A549 (cell line): ENCODE measurements at regions of chr7 and their contacts with region 1.

Region 1: DNA sequence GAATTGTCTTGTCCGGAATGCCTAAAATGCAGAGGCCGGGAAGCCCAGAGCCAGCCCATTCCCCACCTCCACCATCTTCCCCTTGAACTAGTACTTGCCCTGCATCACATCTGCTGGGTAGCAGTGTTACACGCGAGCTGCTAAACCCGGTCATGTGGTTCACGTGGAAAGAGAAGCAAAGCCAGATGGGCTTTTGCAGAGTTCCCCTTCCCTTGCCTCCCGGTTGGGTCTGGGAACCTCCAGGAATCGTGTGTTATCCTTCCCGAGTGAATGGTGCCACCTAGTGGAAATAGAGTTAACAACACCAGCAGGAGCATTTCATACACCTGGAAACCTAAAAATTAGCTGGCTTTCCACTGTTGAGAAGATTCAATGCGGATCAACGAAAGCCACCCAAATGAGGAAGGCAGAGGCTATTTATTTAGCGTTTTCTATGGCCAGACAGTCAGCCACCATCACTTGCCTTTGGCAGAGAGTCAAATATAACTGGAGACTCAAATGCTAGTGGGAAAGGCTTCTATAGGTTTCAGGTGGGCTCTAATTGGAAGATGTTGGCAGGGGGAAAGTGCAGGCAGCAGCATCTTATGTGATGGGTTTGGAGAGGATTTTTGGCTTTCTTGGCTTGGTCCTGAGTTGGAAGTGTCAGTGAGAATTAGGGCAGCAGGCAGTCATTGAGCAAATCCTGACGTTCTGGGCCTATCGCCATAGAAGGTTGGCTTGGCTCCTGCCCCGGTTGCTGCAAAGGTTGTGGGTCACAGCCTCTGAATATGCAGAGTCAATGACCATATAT is 12.9 kb upstream of the DENND2A start:
- DNase-seq: peak; percentile 73 to 81
- ATAC-seq: peak; percentile 86 to 93
- H3K4me3 ChIP-seq: no peak overlapping the region
- H3K27ac ChIP-seq: peak overlapping the region; percentile 15 to 41; a peak in 3 of 6 replicates
- H3K4me1 ChIP-seq: peaks cover 4% of the 10 kb centered on the region; the same call in 1 of the 3 replicates
- CTCF ChIP-seq: peak; percentile 96
- EP300 ChIP-seq: no peak
- POLR2A ChIP-seq: no peak
- RAD21 ChIP-seq: peak; percentile 96 to 99

Region 2: DNA sequence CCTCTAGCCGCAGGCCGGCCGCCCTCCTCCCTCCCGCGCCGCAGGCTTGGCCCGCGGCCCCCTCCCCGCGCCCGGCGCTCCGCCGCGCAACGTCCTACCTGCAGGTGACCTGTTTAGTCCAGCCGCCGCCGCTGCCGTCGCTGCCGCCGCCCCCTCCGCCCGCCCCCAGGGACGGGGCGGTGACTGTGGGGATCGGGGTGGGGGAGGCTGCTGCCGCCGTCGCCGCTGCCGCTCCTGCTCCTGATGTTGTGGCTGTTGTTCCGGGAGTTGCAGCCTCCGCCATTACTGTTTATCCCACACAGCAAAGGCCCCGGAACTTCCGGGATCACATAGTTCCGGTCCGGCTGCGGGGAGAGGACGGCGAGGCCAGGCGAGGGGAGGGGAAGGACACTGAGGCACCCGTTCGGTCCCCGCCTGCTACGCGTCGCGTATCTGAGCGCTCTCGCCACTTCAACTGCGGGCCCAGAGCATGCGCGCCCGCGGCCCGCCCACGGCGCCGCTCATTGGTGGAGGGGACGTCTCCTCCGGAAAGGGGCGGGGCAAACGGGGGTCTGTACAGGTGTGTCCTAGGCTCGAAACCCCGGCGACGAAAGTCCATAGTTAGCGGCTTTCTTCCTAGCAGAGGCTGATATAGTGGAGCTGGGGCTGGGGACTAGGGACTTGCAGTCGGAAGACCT is 174.3 kb before region 1 on chr7 and contains the start of gene MKRN1:
- CTCF ChIA-PET with region 1: interaction called, 44 read pairs
- POLR2A ChIA-PET with region 1: interaction called, 3 read pairs
- DNase-seq: peak; percentile 91 to 95
- ATAC-seq: peak; percentile 97 to 98
- H3K4me3 ChIP-seq: peak within 1 kb of the TSS; percentile 82
- H3K27ac ChIP-seq: peak within 1 kb of the TSS; percentile 89 to 95
- H3K4me1 ChIP-seq: peaks cover 13% of the 10 kb centered on the region; the same call in 2 of the 3 replicates
- CTCF ChIP-seq: no peak
- EP300 ChIP-seq: no peak
- POLR2A ChIP-seq: peak; percentile 47
- RAD21 ChIP-seq: no peak
- polyA plus RNA-seq, gene MKRN1: 65.1 and 68.8 TPM in 2 replicates

Region 3: GRCh38 chr7:140506788-140507464 is 146.6 kb before region 1 on chr7:
- CTCF ChIA-PET with region 1: interaction called, 493 read pairs
- POLR2A ChIA-PET with region 1: no interaction called
- DNase-seq: peak in 1 of 2 experiments; percentile 27
- ATAC-seq: peak; percentile 74 to 84
- H3K4me3 ChIP-seq: no peak overlapping the region
- H3K27ac ChIP-seq: peak overlapping the region in 1 of 2 experiments; percentile 18; a peak in 1 of 6 replicates
- H3K4me1 ChIP-seq: 0 out of 3 replicates have a peak, but pooled peaks cover 3% of the 10 kb centered on the region
- CTCF ChIP-seq: no peak
- EP300 ChIP-seq: no peak
- POLR2A ChIP-seq: no peak
- RAD21 ChIP-seq: no peak

Region 4: DNA sequence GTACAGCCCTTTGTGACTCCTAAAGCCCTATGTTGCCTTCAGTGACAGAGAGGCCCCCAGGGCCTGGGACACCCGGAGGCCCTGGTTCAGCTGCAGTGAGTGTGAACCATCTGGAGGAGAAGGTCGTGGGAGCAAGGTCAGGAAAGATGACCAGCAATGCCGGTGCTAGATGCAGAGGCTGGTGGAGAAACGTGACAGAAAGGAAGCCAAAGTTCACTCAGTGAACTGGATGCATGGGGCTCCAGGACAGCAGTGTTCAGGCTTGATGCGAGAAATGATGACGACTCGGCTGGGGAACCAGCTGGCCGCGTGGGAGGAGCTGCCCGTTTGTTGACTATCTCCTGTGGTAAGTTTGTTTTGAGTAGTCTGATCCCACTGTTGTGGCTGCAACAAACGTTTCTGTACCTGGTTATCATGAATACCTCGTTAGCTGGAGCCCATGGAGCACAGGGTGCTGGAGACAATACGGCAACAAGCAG is 120.1 kb before region 1 on chr7:
- CTCF ChIA-PET with region 1: interaction called, 493 read pairs
- POLR2A ChIA-PET with region 1: no interaction called
- DNase-seq: no peak
- ATAC-seq: no peak
- H3K4me3 ChIP-seq: no peak overlapping the region
- H3K27ac ChIP-seq: no peak overlapping the region
- H3K4me1 ChIP-seq: no peaks in the 10 kb centered on the region
- CTCF ChIP-seq: no peak
- EP300 ChIP-seq: no peak
- POLR2A ChIP-seq: no peak
- RAD21 ChIP-seq: no peak

Region 5: GRCh38 chr7:140635821-140636220 is 17.7 kb before region 1 on chr7:
- CTCF ChIA-PET with region 1: interaction called, 14 read pairs
- POLR2A ChIA-PET with region 1: no interaction called
- DNase-seq: no peak
- ATAC-seq: no peak
- H3K4me3 ChIP-seq: no peak overlapping the region
- H3K27ac ChIP-seq: no peak overlapping the region
- H3K4me1 ChIP-seq: no peaks in the 10 kb centered on the region; the same call in 2 of the 3 replicates
- CTCF ChIP-seq: no peak
- EP300 ChIP-seq: no peak
- POLR2A ChIP-seq: no peak
- RAD21 ChIP-seq: no peak

Region 6: GRCh38 chr7:140640727-140641523 is 12.6 kb before region 1 on chr7 and contains the start of gene DENND2A:
- CTCF ChIA-PET with region 1: interaction called, 15 read pairs
- POLR2A ChIA-PET with region 1: no interaction called
- DNase-seq: no peak
- ATAC-seq: peak; percentile 38 to 55
- H3K4me3 ChIP-seq: peak within 1 kb of the TSS; percentile 63
- H3K27ac ChIP-seq: peak within 1 kb of the TSS; percentile 69 to 95
- H3K4me1 ChIP-seq: no peaks in the 10 kb centered on the region; the same call in 2 of the 3 replicates
- CTCF ChIP-seq: no peak
- EP300 ChIP-seq: no peak
- POLR2A ChIP-seq: no peak
- RAD21 ChIP-seq: no peak
- polyA plus RNA-seq, gene DENND2A: 0.61 and 0.63 TPM in 2 replicates

Region 7: DNA sequence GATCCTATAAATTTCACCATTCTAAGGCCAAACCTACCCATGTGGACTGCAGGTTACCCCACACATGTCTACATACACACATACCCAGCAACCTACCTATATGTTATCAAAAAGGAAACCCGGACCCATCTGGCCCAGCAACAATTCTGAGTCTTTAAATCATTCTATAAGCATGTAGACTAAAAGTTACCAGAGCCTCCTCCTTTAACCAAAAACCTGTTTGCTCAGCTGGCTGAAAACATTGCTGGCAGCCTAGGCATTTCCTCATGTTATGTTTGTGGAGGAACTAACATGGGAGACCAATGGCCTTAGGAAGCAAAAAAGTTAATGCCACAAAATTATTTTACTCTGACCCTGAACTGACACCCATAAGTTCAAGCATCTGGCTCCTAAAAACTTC is 14.0 kb after region 1 on chr7:
- CTCF ChIA-PET with region 1: interaction called, 10 read pairs
- POLR2A ChIA-PET with region 1: no interaction called
- DNase-seq: no peak
- ATAC-seq: no peak
- H3K4me3 ChIP-seq: no peak overlapping the region
- H3K27ac ChIP-seq: no peak overlapping the region
- H3K4me1 ChIP-seq: 0 out of 3 replicates have a peak, but pooled peaks cover 3% of the 10 kb centered on the region
- CTCF ChIP-seq: no peak
- EP300 ChIP-seq: no peak
- POLR2A ChIP-seq: no peak
- RAD21 ChIP-seq: no peak

Region 8: DNA sequence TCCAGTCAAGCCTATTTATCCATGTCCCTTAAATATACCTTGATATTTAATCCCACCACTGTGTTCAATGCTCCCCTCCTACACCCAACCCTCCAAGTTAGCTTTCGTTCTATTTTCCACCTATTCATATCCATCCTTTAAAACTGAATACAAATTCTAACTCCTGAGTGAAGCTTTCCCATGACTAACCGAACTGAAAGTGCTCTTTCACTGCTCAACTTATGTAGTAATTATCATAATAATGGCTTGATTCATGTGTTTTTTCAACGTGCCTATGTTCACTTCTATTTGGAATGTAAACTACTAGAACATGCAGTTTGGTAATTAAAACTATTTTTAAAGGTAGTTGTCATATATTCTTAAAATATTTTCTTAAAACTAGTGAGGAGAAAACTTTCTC is 101.0 kb after region 1 on chr7:
- CTCF ChIA-PET with region 1: no interaction called
- POLR2A ChIA-PET with region 1: no interaction called
- DNase-seq: no peak
- ATAC-seq: no peak
- H3K4me3 ChIP-seq: no peak overlapping the region
- H3K27ac ChIP-seq: no peak overlapping the region
- H3K4me1 ChIP-seq: peaks cover 7% of the 10 kb centered on the region; the same call in 1 of the 3 replicates
- CTCF ChIP-seq: no peak
- EP300 ChIP-seq: no peak
- POLR2A ChIP-seq: no peak
- RAD21 ChIP-seq: no peak

Region 9: GRCh38 chr7:140881507-140882228 is 228.2 kb after region 1 on chr7:
- CTCF ChIA-PET with region 1: no interaction called
- POLR2A ChIA-PET with region 1: no interaction called
- DNase-seq: no peak
- ATAC-seq: no peak
- H3K4me3 ChIP-seq: no peak overlapping the region
- H3K27ac ChIP-seq: no peak overlapping the region
- H3K4me1 ChIP-seq: peaks cover 12% of the 10 kb centered on the region; the same call in 2 of the 3 replicates
- CTCF ChIP-seq: no peak
- EP300 ChIP-seq: no peak
- POLR2A ChIP-seq: no peak
- RAD21 ChIP-seq: no peak